ENCODE measurements at regions of chrX and their contacts with region 1.

Region 1: GRCh38 chrX:13495232-13495631 is 74.2 kb upstream of the EGFL6 start:
- DNase-seq: no peak
- H3K4me3 ChIP-seq: no peak overlapping the region
- H3K27ac ChIP-seq: no peak overlapping the region
- H3K4me1 ChIP-seq: no peaks in the 10 kb centered on the region
- H3K27me3 ChIP-seq: no peaks in the 10 kb centered on the region

Region 2: GRCh38 chrX:12962041-12962504 is 533.2 kb before region 1 on chrX:
- in situ Hi-C with region 1: loop called (anchors 10 kb)
- DNase-seq: no peak
- H3K4me3 ChIP-seq: no peak overlapping the region
- H3K27ac ChIP-seq: no peak overlapping the region
- H3K4me1 ChIP-seq: 0 out of 2 replicates have a peak, but pooled peaks cover under 1% of the 10 kb centered on the region
- H3K27me3 ChIP-seq: no peaks in the 10 kb centered on the region

Region 3: GRCh38 chrX:14015294-14015693 is 520.1 kb after region 1 on chrX:
- in situ Hi-C with region 1: no loop called
- DNase-seq: peak; percentile 10
- H3K4me3 ChIP-seq: peak overlapping the region; percentile 24; the same call in 1 of the 2 replicates
- H3K27ac ChIP-seq: peak overlapping the region; percentile 51
- H3K4me1 ChIP-seq: peaks cover 24% of the 10 kb centered on the region; the same call in 1 of the 2 replicates
- H3K27me3 ChIP-seq: no peaks in the 10 kb centered on the region

Measured in GM23248 (cell line).